ENCODE measurements at regions of chr7 and their contacts with region 1.

Region 1: DNA sequence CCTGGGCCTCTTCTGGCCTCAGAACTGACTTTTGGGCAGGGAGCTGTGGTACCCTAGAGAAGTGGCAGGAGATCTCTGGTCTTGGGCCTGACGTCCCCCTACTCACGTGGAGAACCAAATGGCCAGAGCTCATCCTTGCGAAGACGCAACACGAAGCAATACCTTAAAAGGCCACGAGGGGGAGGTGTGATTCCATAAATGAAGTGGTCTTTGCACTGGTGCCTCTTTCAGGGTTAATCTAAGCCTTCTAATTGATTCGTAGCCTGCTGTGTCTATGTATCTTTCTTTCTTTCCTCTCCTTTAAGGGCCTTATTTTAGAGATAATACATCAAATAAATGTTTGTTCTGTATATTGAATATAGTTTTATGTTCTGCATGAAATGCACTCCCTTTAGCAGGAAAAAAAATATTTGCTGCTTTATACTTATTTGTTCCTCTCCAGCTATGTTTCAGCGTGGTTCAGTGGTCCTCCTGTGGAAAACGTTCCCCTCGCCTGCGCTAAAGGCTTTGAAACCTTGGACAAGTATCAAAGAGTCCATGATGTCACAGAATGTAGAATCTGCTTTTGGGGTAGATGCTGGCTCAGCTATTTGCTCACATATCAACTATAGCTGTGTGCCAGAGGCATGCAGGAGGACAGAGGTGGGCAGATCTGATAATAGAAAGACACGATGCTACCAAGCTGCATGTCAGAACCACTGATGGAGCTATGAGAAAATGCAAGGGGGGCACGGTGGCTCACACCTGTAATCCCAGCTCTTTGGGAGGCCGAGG is 41.0 kb downstream of the STRA8 start:
- DNase-seq: peak; percentile 85
- H3K4me3 ChIP-seq: no peak overlapping the region
- H3K27ac ChIP-seq: no peak overlapping the region
- H3K4me1 ChIP-seq: no peaks in the 10 kb centered on the region
- H3K27me3 ChIP-seq: no peaks in the 10 kb centered on the region; the same call in 1 of the 2 replicates
- CTCF ChIP-seq: peak; percentile 94
- EP300 ChIP-seq: no peak
- RAD21 ChIP-seq: peak; percentile 93

Region 2: GRCh38 chr7:135217645-135218509 is 56.8 kb before region 1 on chr7:
- CTCF ChIA-PET with region 1: interaction called, 12 read pairs
- POLR2A ChIA-PET with region 1: no interaction called
- DNase-seq: no peak
- H3K4me3 ChIP-seq: no peak overlapping the region
- H3K27ac ChIP-seq: no peak overlapping the region
- H3K4me1 ChIP-seq: no peaks in the 10 kb centered on the region
- H3K27me3 ChIP-seq: 0 out of 2 replicates have a peak, but pooled peaks cover 22% of the 10 kb centered on the region
- CTCF ChIP-seq: no peak
- EP300 ChIP-seq: no peak
- RAD21 ChIP-seq: no peak

Region 3: GRCh38 chr7:135291809-135292253 is 17.1 kb after region 1 on chr7:
- CTCF ChIA-PET with region 1: interaction called, 32 read pairs
- POLR2A ChIA-PET with region 1: no interaction called
- DNase-seq: no peak
- H3K4me3 ChIP-seq: no peak overlapping the region
- H3K27ac ChIP-seq: no peak overlapping the region; a peak in 1 of 4 replicates
- H3K4me1 ChIP-seq: peaks cover 0 to 4% of the 10 kb centered on the region in 2 experiments; a peak in 1 of 4 replicates
- H3K27me3 ChIP-seq: no peaks in the 10 kb centered on the region
- CTCF ChIP-seq: no peak
- EP300 ChIP-seq: no peak
- RAD21 ChIP-seq: no peak

Region 4: GRCh38 chr7:135326636-135327280 is 52.1 kb after region 1 on chr7:
- CTCF ChIA-PET with region 1: interaction called, 737 read pairs
- POLR2A ChIA-PET with region 1: no interaction called
- DNase-seq: no peak
- H3K4me3 ChIP-seq: no peak overlapping the region
- H3K27ac ChIP-seq: peak overlapping the region in 1 of 2 experiments; percentile 43; a peak in 1 of 4 replicates
- H3K4me1 ChIP-seq: peaks cover 0 to 30% of the 10 kb centered on the region in 2 experiments; a peak in 2 of 4 replicates
- H3K27me3 ChIP-seq: no peaks in the 10 kb centered on the region
- CTCF ChIP-seq: no peak
- EP300 ChIP-seq: no peak
- RAD21 ChIP-seq: no peak

Region 5: DNA sequence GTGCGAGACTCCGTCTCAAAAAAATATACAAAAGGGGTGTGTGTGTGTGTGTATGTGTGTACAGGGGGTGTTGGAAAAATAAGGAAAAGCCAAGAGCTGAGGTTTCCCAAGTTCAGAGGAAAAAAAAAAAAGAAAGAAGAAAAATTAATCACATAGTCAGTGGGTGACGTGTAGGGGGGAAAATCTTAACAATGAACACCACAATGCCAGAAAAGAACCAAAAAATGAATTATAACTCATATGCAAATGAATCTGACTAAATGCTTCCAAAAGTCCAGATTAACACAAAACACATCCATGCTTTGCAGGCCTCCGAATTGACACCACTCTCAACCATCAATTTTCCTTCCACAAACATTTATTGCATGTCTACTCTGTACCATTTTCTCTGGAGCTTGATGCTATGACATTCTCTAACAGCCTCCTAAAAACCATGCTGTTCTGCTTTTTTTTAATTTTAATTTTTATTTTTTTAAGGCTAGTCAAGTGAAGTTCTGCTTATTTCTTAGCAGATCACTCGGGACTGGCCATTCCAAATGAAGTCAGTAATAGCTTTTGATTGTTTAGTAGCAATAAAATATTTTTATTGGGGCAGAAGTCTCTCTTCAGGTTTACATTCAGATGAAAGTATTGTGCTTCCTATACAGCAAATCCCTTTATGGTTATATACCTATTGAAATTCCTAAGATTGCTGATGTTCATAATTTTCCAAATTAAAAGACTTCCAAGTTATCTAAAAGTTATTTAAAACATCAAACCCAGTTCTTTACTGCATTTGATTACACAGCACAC is 101.4 kb after region 1 on chr7:
- CTCF ChIA-PET with region 1: interaction called, 12 read pairs
- POLR2A ChIA-PET with region 1: no interaction called
- DNase-seq: no peak
- H3K4me3 ChIP-seq: no peak overlapping the region
- H3K27ac ChIP-seq: no peak overlapping the region
- H3K4me1 ChIP-seq: no peaks in the 10 kb centered on the region
- H3K27me3 ChIP-seq: no peaks in the 10 kb centered on the region
- CTCF ChIP-seq: no peak
- EP300 ChIP-seq: no peak
- RAD21 ChIP-seq: no peak